IMR-90 (cell line): ENCODE measurements at regions of chr18 and their contacts with region 1.

Region 1: GRCh38 chr18:55300421-55300935 is 287.5 kb downstream of the TCF4 start:
- DNase-seq: peak; percentile 37
- ATAC-seq: no peak
- H3K4me3 ChIP-seq: no peak overlapping the region
- H3K27ac ChIP-seq: no peak overlapping the region
- H3K4me1 ChIP-seq: peaks cover 12% of the 10 kb centered on the region
- H3K27me3 ChIP-seq: no peaks in the 10 kb centered on the region
- CTCF ChIP-seq: no peak
- POLR2A ChIP-seq: no peak
- RAD21 ChIP-seq: no peak

Region 2: DNA sequence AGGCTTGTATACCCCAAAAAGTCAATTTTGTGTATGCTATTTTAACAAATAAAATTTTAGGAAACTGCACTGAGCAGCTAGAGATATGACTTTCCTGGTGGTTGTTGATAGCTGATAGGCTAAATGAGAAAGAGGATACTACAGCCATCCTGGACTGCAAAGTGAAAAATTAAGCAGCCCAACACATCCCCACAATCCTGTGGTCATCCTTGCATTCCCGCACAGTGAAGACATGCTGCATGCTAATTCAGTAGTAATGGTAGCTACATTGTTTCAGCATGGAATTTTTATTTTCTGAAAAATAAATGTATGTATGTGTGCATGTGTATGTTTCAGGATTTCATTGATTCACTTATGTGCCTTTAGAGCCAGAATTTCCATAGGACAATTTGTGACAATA is 217.0 kb before region 1 on chr18:
- CTCF ChIA-PET with region 1: no interaction called
- POLR2A ChIA-PET with region 1: interaction called, 14 read pairs
- dilution Hi-C with region 1: no loop called
- in situ Hi-C with region 1: no loop called
- intact Hi-C with region 1: no loop called
- DNase-seq: peak; percentile 52
- ATAC-seq: peak; percentile 32; the same call in 1 of the 2 replicates
- H3K4me3 ChIP-seq: no peak overlapping the region
- H3K27ac ChIP-seq: no peak overlapping the region
- H3K4me1 ChIP-seq: no peaks in the 10 kb centered on the region
- H3K27me3 ChIP-seq: peaks cover 9% of the 10 kb centered on the region
- CTCF ChIP-seq: no peak
- POLR2A ChIP-seq: no peak
- RAD21 ChIP-seq: no peak